ENCODE measurements at regions of chr10 and their contacts with region 1.

Region 1: DNA sequence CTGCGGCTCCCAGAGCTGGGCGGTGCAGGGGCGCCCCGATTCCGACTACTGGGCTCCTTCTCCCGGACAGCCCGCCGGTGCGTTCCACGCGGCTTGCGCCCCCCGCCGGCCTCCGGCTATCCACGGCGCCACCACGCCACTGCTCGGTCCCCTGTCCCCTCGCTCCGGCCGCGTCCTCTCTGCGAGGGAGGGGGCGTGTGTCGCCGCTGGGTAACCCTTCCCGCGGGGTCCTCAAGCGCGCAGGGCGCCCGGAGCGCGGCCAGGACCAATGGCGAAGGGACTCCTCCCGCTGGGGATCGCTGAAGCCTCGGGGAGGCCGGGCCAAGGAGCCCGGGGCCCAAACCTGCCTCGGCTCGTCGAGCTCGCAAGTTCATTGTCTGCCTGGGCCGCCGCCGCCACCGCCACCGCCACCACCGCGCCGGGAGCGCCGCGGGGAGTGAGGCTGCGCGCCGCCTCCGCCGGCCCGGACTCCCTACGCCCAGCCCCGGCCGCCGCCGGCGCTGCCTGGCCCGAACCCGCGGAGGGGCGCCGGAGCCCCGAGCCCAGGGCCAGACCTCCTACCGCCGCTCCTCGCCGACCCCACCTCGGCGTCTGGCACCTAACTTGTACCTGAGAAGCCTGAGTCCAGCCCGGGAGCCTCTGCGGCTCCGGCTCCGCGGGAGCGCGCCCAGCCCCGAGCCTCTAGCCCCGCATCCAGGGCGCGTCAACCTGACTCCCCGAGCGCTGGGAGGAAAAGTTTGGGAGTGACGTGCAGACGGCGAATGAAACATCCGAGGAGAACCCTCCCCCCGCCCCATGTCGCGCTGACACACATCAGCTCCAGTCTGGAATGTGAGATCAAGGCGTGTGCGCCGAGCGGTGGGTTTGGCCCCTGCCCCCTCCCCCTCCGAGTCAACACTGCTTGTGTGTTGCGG is at the start of gene CHST15:
- DNase-seq: peak; percentile 90
- H3K4me3 ChIP-seq: peak within 1 kb of the TSS; percentile 75 to 87 (median 82)
- H3K27ac ChIP-seq: peak within 1 kb of the TSS; percentile 81
- H3K4me1 ChIP-seq: peaks cover 16% of the 10 kb centered on the region
- H3K27me3 ChIP-seq: no peaks in the 10 kb centered on the region
- CTCF ChIP-seq: peak in 1 of 2 donors; percentile 28
- total RNA-seq, gene CHST15: 47.3 to 61.0 TPM

Region 2: DNA sequence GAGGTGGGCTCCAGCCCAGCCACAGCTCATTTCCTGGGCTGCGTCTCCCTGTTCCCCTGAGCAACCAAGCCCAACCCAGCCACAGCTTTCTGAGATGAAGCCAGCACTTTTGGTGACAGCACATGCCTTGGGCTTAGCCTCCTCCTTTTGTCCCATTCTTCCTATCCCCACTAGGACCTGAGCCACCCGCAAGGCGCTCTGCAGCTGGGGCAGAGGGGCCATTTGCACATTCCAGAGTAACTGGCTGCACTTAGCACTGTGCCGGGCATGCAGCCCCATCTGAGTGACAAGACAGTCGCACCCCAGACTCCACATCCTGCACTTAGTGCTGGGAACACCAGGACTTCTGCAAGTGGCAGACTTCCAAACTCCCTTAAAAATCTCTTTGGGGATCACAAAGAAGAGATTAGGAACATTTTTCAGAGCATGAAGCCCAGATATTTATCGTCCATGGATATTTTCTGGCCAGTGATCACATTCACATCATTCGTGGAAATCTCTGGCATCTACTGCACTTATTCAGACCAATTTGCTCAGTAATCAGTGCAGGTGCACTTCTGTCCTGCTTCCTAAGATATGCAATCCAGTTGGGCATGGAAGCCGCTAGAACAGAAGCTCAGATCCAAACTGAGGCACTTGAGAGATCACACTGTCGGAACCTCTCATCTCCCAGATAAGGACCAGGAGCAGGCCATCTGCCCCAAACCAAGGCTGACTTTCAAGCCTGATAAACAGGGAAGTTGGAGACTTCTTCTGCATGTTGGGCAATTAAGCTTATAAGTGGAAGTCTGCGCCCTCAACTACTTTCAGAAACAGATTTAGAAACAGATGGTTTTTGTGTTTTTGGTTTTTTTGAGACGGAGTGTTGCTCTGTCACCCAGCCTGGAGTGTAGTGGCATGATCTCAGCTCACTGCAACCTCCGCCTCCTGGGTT is 26.1 kb before region 1 on chr10:
- CTCF ChIA-PET with region 1: no interaction called
- dilution Hi-C with region 1: no loop called
- in situ Hi-C with region 1: no loop called
- intact Hi-C with region 1: loop called (anchors 2 kb)
- DNase-seq: no peak
- H3K4me3 ChIP-seq: no peak overlapping the region
- H3K27ac ChIP-seq: no peak overlapping the region
- H3K4me1 ChIP-seq: peaks cover 23% of the 10 kb centered on the region
- H3K27me3 ChIP-seq: no peaks in the 10 kb centered on the region
- CTCF ChIP-seq: no peak

Region 3: GRCh38 chr10:124152916-124153826 is 60.1 kb after region 1 on chr10:
- CTCF ChIA-PET with region 1: no interaction called
- dilution Hi-C with region 1: no loop called
- in situ Hi-C with region 1: no loop called
- intact Hi-C with region 1: loop called (anchors 1 kb)
- DNase-seq: peak; percentile 98
- H3K4me3 ChIP-seq: no peak overlapping the region
- H3K27ac ChIP-seq: peak overlapping the region; percentile 65
- H3K4me1 ChIP-seq: peaks cover 32% of the 10 kb centered on the region
- H3K27me3 ChIP-seq: no peaks in the 10 kb centered on the region
- CTCF ChIP-seq: no peak

Region 4: GRCh38 chr10:124296121-124296812 is 203.2 kb after region 1 on chr10:
- CTCF ChIA-PET with region 1: no interaction called
- dilution Hi-C with region 1: no loop called
- in situ Hi-C with region 1: no loop called
- intact Hi-C with region 1: loop called (anchors 2 kb)
- DNase-seq: peak; percentile 13
- H3K4me3 ChIP-seq: no peak overlapping the region
- H3K27ac ChIP-seq: no peak overlapping the region
- H3K4me1 ChIP-seq: peaks cover 21% of the 10 kb centered on the region
- H3K27me3 ChIP-seq: no peaks in the 10 kb centered on the region
- CTCF ChIP-seq: peak in 1 of 2 donors; percentile 30

Region 5: GRCh38 chr10:124539935-124540641 is 447.0 kb after region 1 on chr10:
- CTCF ChIA-PET with region 1: no interaction called
- dilution Hi-C with region 1: no loop called
- in situ Hi-C with region 1: no loop called
- intact Hi-C with region 1: no loop called
- DNase-seq: no peak
- H3K4me3 ChIP-seq: no peak overlapping the region
- H3K27ac ChIP-seq: no peak overlapping the region
- H3K4me1 ChIP-seq: peaks cover 7% of the 10 kb centered on the region
- H3K27me3 ChIP-seq: no peaks in the 10 kb centered on the region
- CTCF ChIP-seq: peak; percentile 25 to 56

Measured in mammary epithelial cell (primary cell).